Naive thymus-derived CD4-positive, alpha-beta T cell (primary cell): ENCODE measurements at regions of chr2 and their contacts with region 1.

Region 1: DNA sequence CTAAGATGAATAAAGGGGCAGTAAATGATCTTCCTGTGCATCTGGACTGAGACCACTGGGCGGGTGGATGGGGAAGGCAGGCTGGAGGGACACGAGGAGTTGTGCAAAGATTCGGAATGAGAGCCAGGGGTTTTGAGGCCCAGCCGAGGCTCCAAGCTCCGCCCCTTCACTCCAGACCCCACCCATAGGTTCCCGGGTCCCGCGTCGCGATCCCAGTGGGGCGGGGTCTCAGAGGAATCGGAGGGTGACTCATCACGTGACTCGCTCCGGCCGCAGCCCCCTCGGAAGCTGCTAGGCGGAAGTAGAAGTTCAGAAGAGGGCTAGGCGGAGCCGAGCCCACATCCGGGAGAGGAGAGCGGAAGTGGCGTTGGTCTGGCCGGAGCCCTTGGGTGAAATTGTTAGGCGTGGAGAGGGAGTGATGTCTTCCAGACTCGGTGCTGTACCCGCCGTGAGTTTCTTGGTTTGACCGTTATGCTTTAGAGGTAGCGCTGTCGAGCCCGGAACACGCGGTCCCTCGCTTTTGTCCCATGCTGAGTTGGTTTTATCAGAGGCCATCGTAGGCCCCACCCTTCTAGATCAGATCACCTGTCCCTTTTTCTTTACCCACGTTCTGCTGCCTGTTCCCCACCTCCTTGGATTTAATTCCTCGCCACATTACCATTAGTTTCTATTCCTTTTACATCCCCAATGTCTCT is at the start of gene ZNF512:
- DNase-seq: peak; percentile 44 to 76 (median 70)
- ATAC-seq: peak; percentile 92
- H3K4me3 ChIP-seq: peak within 1 kb of the TSS; percentile 75
- H3K4me3 Mint-ChIP-seq: peak within 1 kb of the TSS; percentile 90 to 100 (median 95)
- H3K27ac ChIP-seq: peak within 1 kb of the TSS; percentile 84
- H3K27ac Mint-ChIP-seq: peak within 1 kb of the TSS; percentile 85 to 98 (median 94)
- H3K4me1 ChIP-seq: peaks cover 22 to 35% of the 10 kb centered on the region in 2 donors
- H3K4me1 Mint-ChIP-seq: peaks cover 37 to 60% (median 53%) of the 10 kb centered on the region in 7 donors
- H3K27me3 ChIP-seq: no peaks in the 10 kb centered on the region
- H3K27me3 Mint-ChIP-seq: peaks cover 0 to 16% (median 0%) of the 10 kb centered on the region in 5 donors
- total RNA-seq, gene ZNF512: 26.6 to 64.6 (median 50.1) TPM

Region 2: GRCh38 chr2:27628767-27629709 is 46.2 kb after region 1 on chr2 and contains the starts of genes CCDC121 and GPN1:
- CTCF ChIA-PET with region 1: no interaction called
- POLR2A ChIA-PET with region 1: no interaction called
- intact Hi-C with region 1: loop called (anchors 1 to 2 kb)
- DNase-seq: peak; percentile 79 to 96 (median 93)
- ATAC-seq: peak; percentile 99
- H3K4me3 ChIP-seq: peak within 1 kb of the TSS; percentile 92
- H3K4me3 Mint-ChIP-seq: no peak within 1 kb of the TSS
- H3K27ac ChIP-seq: peak within 1 kb of the TSS; percentile 92
- H3K27ac Mint-ChIP-seq: peak within 1 kb of the TSS in 5 of 9 donors; percentile 16 to 72 (median 59)
- H3K4me1 ChIP-seq: peaks cover 11 to 13% of the 10 kb centered on the region in 2 donors
- H3K4me1 Mint-ChIP-seq: peaks cover 1 to 33% (median 22%) of the 10 kb centered on the region in 7 donors
- H3K27me3 ChIP-seq: no peaks in the 10 kb centered on the region
- H3K27me3 Mint-ChIP-seq: no peaks in the 10 kb centered on the region
- total RNA-seq, gene CCDC121: 0.61 to 2.7 (median 1.9) TPM
- total RNA-seq, gene GPN1: 27.8 to 45.5 (median 28.9) TPM